ENCODE measurements at regions of chr20 and their contacts with region 1.

Region 1: GRCh38 chr20:59032023-59032712 is at the start of gene ATP5F1E:
- DNase-seq: peak; percentile 93
- H3K4me3 Mint-ChIP-seq: peak within 1 kb of the TSS; percentile 90
- H3K27ac Mint-ChIP-seq: peak within 1 kb of the TSS; percentile 78
- H3K4me1 Mint-ChIP-seq: peaks cover 33% of the 10 kb centered on the region
- H3K27me3 Mint-ChIP-seq: no peaks in the 10 kb centered on the region
- CTCF ChIP-seq: no peak
- total RNA-seq, gene ATP5F1E: 65.2 and 69.7 TPM in 2 replicates

Region 2: DNA sequence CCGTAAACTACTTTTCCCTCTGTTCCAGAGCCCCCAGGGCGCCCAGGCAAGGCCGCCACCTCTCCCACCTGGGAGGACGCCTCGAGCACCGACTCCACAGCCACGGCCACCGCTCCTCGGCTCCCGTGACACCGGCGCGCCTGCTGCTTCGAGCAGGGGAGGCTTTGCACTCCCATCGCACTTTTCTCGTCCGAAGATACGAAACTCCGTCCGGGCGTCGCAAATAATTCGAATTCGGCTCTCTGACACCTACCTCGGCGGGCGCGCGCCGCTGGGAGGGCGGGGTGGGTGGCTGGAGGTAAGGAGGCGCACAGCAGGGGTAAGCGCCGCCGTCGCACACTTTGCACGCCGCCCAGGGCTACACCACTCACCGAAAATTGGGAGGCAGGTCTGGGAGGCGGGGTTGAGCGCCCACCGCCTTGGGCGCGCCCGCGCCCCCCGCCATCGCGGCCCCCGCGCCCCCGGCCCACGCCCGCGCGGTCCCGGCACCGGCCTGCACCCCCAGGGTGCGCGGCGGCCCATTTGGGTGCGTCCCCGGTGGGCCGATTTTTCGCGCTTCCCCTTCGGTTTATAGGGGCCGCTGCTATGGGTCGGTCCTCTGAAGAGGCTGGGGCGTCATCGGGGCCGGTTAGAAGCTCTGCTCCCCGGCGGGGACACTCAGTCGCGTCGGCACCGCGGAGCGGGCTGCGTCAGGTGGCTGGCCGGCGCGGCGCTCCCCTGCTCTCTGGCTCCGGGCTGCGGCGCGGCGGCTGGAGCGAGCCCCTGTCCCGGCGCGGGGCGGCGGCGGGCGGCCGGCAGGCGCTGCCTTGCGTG is 143.4 kb before region 1 on chr20:
- CTCF ChIA-PET with region 1: interaction called, 3 read pairs
- POLR2A ChIA-PET with region 1: interaction called, 27 read pairs
- intact Hi-C with region 1: loop called (anchors 1 kb)
- DNase-seq: peak; percentile 73
- H3K4me3 Mint-ChIP-seq: peak overlapping the region; percentile 92
- H3K27ac Mint-ChIP-seq: no peak overlapping the region
- H3K4me1 Mint-ChIP-seq: peaks cover 5% of the 10 kb centered on the region
- H3K27me3 Mint-ChIP-seq: no peaks in the 10 kb centered on the region
- CTCF ChIP-seq: no peak

Region 3: GRCh38 chr20:58980700-58981627 is 51.2 kb before region 1 on chr20 and contains the start of gene NELFCD:
- CTCF ChIA-PET with region 1: interaction called, 3 read pairs
- POLR2A ChIA-PET with region 1: interaction called, 27 read pairs
- intact Hi-C with region 1: no loop called
- DNase-seq: peak; percentile 78
- H3K4me3 Mint-ChIP-seq: peak within 1 kb of the TSS; percentile 78
- H3K27ac Mint-ChIP-seq: peak within 1 kb of the TSS; percentile 54
- H3K4me1 Mint-ChIP-seq: peaks cover 27% of the 10 kb centered on the region
- H3K27me3 Mint-ChIP-seq: no peaks in the 10 kb centered on the region
- CTCF ChIP-seq: no peak
- total RNA-seq, gene NELFCD: 59.6 and 79.8 TPM in 2 replicates

Region 4: DNA sequence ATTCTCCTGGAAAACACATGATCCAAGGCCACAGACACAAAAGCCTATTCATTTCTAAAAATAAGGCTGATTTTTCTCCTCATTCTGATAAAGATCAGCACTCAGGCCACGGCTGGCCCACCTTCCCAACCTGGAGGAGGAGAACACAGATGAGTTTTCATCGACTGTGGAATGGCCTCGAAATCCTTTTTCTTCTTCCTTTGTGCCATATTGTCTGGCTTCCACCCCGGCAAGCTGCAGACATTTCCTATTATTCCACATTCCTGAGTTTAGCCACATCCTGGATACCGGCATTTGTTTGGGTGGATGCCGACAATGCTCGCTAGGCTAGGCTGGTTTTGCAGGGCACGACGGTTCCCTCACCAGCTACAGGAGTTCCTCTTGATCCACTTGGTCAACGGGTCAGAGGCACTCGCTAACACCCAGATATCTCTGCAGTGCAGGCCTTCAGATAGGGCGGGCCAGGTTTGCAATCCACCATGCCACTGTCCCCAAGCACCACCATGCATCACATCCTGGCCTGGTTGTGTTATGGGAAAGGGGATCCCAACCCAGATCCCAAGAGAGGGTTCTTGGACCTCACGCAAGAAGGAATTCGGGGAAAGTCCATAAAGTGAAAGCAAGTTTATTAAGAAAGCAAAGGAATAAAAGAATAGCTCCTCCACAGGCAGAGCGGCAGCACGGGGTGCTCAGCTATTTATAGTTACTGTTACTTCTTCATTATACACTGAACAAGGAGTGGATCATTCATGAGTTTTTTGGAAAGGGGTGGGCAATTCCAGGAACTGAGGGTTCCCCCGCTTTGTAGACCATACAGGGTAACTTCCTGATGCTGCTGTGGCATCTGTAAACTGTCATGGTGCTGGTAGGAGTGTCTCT is 20.9 kb before region 1 on chr20:
- CTCF ChIA-PET with region 1: interaction called, 3 read pairs
- POLR2A ChIA-PET with region 1: interaction called, 19 read pairs
- intact Hi-C with region 1: no loop called
- DNase-seq: peak; percentile 59
- H3K4me3 Mint-ChIP-seq: no peak overlapping the region
- H3K27ac Mint-ChIP-seq: peak overlapping the region; percentile 58
- H3K4me1 Mint-ChIP-seq: peaks cover 24% of the 10 kb centered on the region
- H3K27me3 Mint-ChIP-seq: no peaks in the 10 kb centered on the region
- CTCF ChIP-seq: no peak

Region 5: GRCh38 chr20:59042796-59043660 is 10.9 kb after region 1 on chr20:
- CTCF ChIA-PET with region 1: interaction called, 19 read pairs
- POLR2A ChIA-PET with region 1: interaction called, 107 read pairs
- intact Hi-C with region 1: no loop called
- DNase-seq: peak; percentile 93
- H3K4me3 Mint-ChIP-seq: peak overlapping the region; percentile 86
- H3K27ac Mint-ChIP-seq: peak overlapping the region; percentile 90
- H3K4me1 Mint-ChIP-seq: peaks cover 39% of the 10 kb centered on the region
- H3K27me3 Mint-ChIP-seq: no peaks in the 10 kb centered on the region
- CTCF ChIP-seq: no peak

Region 6: DNA sequence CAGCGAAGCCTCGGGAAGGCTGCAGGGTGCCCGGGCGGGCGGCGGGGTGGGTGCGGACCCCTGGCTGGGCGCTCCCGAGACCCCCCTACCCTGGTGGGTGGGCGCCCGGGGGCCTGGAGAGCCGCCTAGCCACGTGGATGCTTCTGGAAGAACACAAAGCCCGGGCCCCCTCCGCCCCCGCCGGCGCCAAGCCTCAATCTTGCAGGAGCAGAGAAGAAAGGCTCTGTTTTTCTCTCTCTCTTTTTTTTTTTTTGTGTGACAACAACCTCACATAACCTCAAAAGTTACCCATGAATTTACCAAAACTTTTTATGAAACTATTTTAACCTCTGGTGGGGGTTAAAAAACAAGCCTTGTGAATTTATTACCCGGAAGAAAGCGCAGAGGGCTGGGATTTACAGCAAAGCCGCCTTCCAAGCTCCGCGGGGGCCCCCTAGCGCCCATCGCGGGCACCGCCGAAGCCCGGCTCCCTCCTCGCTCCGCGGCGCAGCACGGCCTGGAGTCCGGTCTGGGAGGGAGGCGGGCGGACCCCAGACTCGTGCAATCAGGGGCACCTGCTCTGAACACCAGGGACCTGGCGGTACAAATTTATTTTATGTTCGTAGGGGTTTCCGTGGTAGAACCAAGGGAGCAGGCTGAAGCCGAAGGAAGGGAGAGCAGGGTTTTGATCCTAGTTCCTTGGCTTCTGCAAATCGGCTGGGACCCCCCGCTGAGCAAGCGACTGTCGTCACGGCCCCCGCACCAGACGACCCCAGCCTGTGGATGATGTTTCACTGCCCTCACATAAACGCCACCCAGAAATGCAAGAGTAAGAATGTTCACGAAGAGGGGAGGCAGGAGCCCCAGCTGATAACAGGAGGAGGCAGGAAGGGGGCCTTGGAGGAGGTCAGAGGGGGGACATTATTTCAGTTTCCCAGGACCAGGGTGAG is 190.3 kb after region 1 on chr20:
- CTCF ChIA-PET with region 1: interaction called, 6 read pairs
- POLR2A ChIA-PET with region 1: interaction called, 10 read pairs
- intact Hi-C with region 1: no loop called
- DNase-seq: peak; percentile 55
- H3K4me3 Mint-ChIP-seq: peak overlapping the region; percentile 66
- H3K27ac Mint-ChIP-seq: no peak overlapping the region
- H3K4me1 Mint-ChIP-seq: no peaks in the 10 kb centered on the region
- H3K27me3 Mint-ChIP-seq: peaks cover 96% of the 10 kb centered on the region
- CTCF ChIP-seq: peak; percentile 95

Region 7: DNA sequence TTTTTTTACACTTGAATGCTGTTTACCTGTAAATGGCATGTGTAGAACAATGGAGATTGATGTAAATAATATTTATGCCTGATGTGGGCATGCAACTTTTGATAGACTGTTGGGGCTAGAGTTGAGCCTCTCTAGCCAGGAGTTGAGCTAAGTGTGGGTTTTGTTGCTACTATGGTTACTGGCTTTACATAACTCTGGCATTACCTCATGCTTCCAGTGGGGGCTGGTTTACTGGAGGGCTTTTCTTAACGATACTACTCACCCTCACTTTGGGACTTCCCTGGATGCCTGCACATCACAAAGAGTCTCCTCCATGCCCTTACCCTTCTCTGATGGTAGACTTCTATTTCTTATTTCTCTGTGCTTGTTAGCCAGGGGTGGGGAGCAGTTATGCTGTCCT is 1695.2 kb after region 1 on chr20:
- CTCF ChIA-PET with region 1: no interaction called
- POLR2A ChIA-PET with region 1: no interaction called
- intact Hi-C with region 1: no loop called
- DNase-seq: no peak
- H3K4me3 Mint-ChIP-seq: no peak overlapping the region
- H3K27ac Mint-ChIP-seq: no peak overlapping the region
- H3K4me1 Mint-ChIP-seq: no peaks in the 10 kb centered on the region
- H3K27me3 Mint-ChIP-seq: peaks cover 43% of the 10 kb centered on the region
- CTCF ChIP-seq: no peak